Right cardiac atrium (tissue), 5 donors: ENCODE measurements at regions of chr15 and their contacts with region 1.

Region 1: GRCh38 chr15:26119322-26119721 is 256.2 kb upstream of the ATP10A start:
- DNase-seq: no peak
- ATAC-seq: no peak
- H3K4me3 ChIP-seq: no peak overlapping the region
- H3K27ac ChIP-seq: no peak overlapping the region
- H3K4me1 ChIP-seq: no peaks in the 10 kb centered on the region
- H3K27me3 ChIP-seq: no peaks in the 10 kb centered on the region

Region 2: DNA sequence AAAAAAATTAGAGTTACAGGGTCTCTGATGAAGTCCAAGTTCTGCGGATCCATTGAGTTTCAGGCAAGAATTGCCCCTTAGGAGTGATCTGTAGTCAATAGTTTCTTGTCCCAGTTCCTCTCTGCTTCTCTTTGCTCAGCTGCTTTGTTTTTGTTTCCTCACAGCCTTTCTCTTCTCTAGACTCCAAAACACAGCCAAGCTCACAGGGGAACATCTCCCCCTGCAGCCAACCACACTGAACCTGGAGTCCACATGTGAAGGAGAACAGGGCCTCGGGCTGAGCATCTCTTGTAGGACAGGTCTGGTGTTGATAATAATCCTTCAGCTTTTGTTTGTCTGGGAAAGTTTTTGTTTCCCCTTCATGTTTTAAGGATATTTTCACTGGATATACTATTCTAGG is 53.6 kb before region 1 on chr15:
- intact Hi-C with region 1: no loop called
- DNase-seq: no peak
- ATAC-seq: no peak
- H3K4me3 ChIP-seq: no peak overlapping the region
- H3K27ac ChIP-seq: no peak overlapping the region
- H3K4me1 ChIP-seq: no peaks in the 10 kb centered on the region
- H3K27me3 ChIP-seq: no peaks in the 10 kb centered on the region

Region 3: GRCh38 chr15:26075770-26076169 is 43.6 kb before region 1 on chr15:
- intact Hi-C with region 1: loop called in 1 of 4 experiments (anchors 2 kb)
- DNase-seq: no peak
- ATAC-seq: no peak
- H3K4me3 ChIP-seq: no peak overlapping the region
- H3K27ac ChIP-seq: no peak overlapping the region
- H3K4me1 ChIP-seq: peaks cover 4% of the 10 kb centered on the region
- H3K27me3 ChIP-seq: no peaks in the 10 kb centered on the region

Region 4: DNA sequence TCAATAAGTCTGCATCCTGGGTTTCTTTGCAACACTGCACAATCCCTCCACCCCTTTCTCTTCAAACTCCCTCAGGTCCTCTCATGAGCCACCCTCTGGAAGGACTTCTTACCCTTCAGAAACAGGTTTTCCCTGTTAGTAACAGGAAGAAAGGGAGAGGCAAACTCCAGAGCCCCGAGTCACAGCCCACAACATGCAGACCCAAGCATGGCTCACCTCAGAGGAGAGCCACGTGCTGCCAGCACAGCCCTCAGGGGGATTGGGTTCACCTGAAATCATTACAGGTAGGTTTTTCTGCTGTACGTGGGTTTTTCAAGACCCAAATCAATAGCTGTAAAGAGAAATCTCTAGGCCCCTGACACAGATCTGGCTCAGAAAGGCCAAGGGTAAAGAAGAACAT is 103.5 kb after region 1 on chr15:
- intact Hi-C with region 1: no loop called
- DNase-seq: no peak
- ATAC-seq: no peak
- H3K4me3 ChIP-seq: no peak overlapping the region
- H3K27ac ChIP-seq: no peak overlapping the region
- H3K4me1 ChIP-seq: no peaks in the 10 kb centered on the region
- H3K27me3 ChIP-seq: no peaks in the 10 kb centered on the region

Region 5: DNA sequence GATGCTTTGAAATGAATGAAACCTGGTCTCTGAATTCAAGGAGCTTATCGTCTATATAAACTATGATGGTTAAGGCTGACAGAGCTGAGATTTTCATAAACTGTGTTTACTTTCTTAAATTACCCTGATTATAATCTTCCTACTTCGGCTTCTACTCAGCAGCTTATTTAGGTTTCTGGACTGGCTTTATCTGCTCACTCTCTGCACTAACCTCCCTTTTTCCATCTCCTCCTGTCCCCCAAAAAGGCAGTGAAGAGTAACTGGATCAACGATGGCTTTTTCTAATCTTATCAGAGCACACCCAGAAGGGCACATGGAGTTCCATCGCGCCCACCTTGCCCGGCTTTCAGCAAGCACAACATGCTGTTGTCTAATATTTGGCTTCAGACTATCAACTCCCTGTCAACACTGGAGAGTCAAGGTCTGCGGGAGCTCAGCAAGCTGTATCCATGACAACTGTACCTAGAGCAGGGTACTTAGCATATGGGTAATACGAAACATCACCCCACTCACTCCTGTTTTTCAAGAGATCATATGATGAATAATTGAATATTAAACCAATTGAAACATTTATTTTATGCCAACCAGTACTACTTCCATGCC is 236.3 kb after region 1 on chr15:
- intact Hi-C with region 1: no loop called
- DNase-seq: peak in 1 of 3 donors; percentile 63
- ATAC-seq: peak; percentile 58 to 73
- H3K4me3 ChIP-seq: no peak overlapping the region
- H3K27ac ChIP-seq: no peak overlapping the region
- H3K4me1 ChIP-seq: no peaks in the 10 kb centered on the region
- H3K27me3 ChIP-seq: no peaks in the 10 kb centered on the region